Caco-2 (cell line): ENCODE measurements at regions of chr11 and their contacts with region 1.

Region 1: GRCh38 chr11:73335204-73335923 is 27.3 kb downstream of the ARHGEF17 start:
- DNase-seq: peak; percentile 91 to 96
- H3K4me3 ChIP-seq: no peak overlapping the region
- H3K4me3 Mint-ChIP-seq: no peak overlapping the region
- H3K27ac Mint-ChIP-seq: peak overlapping the region; percentile 19
- H3K4me1 ChIP-seq: peaks cover 52% of the 10 kb centered on the region
- H3K4me1 Mint-ChIP-seq: peaks cover 36% of the 10 kb centered on the region
- H3K27me3 ChIP-seq: no peaks in the 10 kb centered on the region
- H3K27me3 Mint-ChIP-seq: no peaks in the 10 kb centered on the region
- CTCF ChIP-seq: peak; percentile 100

Region 2: GRCh38 chr11:73215191-73216134 is 119.9 kb before region 1 on chr11:
- CTCF ChIA-PET with region 1: no interaction called
- POLR2A ChIA-PET with region 1: no interaction called
- intact Hi-C with region 1: no loop called
- DNase-seq: no peak
- H3K4me3 ChIP-seq: no peak overlapping the region
- H3K4me3 Mint-ChIP-seq: no peak overlapping the region
- H3K27ac Mint-ChIP-seq: no peak overlapping the region
- H3K4me1 ChIP-seq: peaks cover 30% of the 10 kb centered on the region
- H3K4me1 Mint-ChIP-seq: peaks cover 26% of the 10 kb centered on the region
- H3K27me3 ChIP-seq: no peaks in the 10 kb centered on the region
- H3K27me3 Mint-ChIP-seq: no peaks in the 10 kb centered on the region
- CTCF ChIP-seq: no peak

Region 3: DNA sequence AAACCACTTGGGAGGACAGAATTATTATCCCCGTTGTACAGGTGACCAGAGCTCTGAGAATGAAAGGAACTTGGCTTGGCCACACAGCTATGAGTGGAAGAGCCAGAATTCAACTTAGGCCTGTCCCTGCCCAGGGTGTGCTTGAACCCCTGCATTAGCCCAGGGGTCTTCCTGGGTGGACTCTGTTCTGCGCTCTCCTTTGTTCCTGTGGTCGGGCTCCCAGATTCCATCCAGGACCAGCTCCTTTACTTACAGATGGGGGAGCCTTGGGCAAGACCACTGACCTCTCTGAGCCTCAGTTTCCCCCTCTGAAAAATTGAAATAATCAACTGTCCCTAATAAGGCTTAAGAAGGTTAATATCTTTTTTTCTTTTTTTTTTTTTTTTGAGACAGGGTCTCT is 80.8 kb before region 1 on chr11:
- CTCF ChIA-PET with region 1: no interaction called
- POLR2A ChIA-PET with region 1: no interaction called
- intact Hi-C with region 1: no loop called
- DNase-seq: no peak
- H3K4me3 ChIP-seq: no peak overlapping the region
- H3K4me3 Mint-ChIP-seq: no peak overlapping the region
- H3K27ac Mint-ChIP-seq: no peak overlapping the region
- H3K4me1 ChIP-seq: peaks cover 12% of the 10 kb centered on the region
- H3K4me1 Mint-ChIP-seq: peaks cover 15% of the 10 kb centered on the region
- H3K27me3 ChIP-seq: no peaks in the 10 kb centered on the region
- H3K27me3 Mint-ChIP-seq: no peaks in the 10 kb centered on the region
- CTCF ChIP-seq: no peak

Region 4: GRCh38 chr11:73295231-73295995 is 40.0 kb before region 1 on chr11:
- CTCF ChIA-PET with region 1: interaction called, 26 read pairs
- POLR2A ChIA-PET with region 1: no interaction called
- intact Hi-C with region 1: loop called (anchors 1 kb)
- DNase-seq: peak; percentile 73 to 86
- H3K4me3 ChIP-seq: no peak overlapping the region
- H3K4me3 Mint-ChIP-seq: no peak overlapping the region
- H3K27ac Mint-ChIP-seq: no peak overlapping the region
- H3K4me1 ChIP-seq: peaks cover 23% of the 10 kb centered on the region
- H3K4me1 Mint-ChIP-seq: peaks cover 10% of the 10 kb centered on the region
- H3K27me3 ChIP-seq: no peaks in the 10 kb centered on the region
- H3K27me3 Mint-ChIP-seq: no peaks in the 10 kb centered on the region
- CTCF ChIP-seq: peak; percentile 95 to 97

Region 5: DNA sequence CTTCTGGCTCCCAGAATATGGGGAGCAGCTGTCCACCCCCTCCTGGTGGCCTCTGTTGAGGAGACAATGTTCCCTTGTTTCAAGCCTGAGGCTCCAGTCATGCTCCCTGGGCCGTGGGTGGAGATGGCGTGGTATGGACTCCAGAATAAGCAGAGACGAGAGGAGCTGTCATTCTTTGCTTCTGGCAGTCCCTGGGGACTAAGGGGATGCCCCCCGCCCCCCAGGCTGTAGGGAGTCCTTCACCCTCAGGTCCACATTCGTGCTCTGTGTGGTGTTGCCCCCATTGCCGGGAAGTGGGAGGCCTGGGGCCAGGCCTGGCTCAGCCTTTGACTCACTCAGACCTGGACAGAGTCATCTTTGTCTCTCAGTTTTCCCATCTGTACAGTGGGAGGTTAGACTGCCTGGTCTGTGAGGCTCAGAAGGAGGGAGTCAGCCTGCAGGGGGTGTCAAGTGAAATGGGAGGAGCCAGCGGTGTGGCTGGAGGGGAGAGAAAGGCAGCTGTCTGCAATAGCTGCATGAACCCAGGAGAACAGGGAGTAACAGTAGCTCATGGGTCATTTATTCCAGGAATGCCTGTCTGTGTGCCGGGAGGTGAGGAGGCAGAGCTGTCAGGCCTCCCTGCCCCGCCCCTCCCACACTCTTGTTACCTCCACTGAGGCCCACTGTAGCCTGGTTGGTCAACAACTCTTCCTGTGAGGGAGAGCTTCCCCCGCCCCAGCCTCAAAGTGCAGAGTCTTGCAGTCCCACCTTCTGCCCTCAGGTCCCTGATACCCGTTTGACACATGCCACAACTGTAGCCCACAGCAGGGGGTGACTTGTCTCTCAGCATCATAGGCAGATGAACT is 21.0 kb before region 1 on chr11:
- CTCF ChIA-PET with region 1: interaction called, 285 read pairs
- POLR2A ChIA-PET with region 1: interaction called, 17 read pairs
- intact Hi-C with region 1: no loop called
- DNase-seq: peak; percentile 88 to 93
- H3K4me3 ChIP-seq: no peak overlapping the region
- H3K4me3 Mint-ChIP-seq: peak overlapping the region; percentile 4
- H3K27ac Mint-ChIP-seq: peak overlapping the region; percentile 35
- H3K4me1 ChIP-seq: peaks cover 51% of the 10 kb centered on the region
- H3K4me1 Mint-ChIP-seq: peaks cover 32% of the 10 kb centered on the region
- H3K27me3 ChIP-seq: no peaks in the 10 kb centered on the region
- H3K27me3 Mint-ChIP-seq: no peaks in the 10 kb centered on the region
- CTCF ChIP-seq: no peak

Region 6: DNA sequence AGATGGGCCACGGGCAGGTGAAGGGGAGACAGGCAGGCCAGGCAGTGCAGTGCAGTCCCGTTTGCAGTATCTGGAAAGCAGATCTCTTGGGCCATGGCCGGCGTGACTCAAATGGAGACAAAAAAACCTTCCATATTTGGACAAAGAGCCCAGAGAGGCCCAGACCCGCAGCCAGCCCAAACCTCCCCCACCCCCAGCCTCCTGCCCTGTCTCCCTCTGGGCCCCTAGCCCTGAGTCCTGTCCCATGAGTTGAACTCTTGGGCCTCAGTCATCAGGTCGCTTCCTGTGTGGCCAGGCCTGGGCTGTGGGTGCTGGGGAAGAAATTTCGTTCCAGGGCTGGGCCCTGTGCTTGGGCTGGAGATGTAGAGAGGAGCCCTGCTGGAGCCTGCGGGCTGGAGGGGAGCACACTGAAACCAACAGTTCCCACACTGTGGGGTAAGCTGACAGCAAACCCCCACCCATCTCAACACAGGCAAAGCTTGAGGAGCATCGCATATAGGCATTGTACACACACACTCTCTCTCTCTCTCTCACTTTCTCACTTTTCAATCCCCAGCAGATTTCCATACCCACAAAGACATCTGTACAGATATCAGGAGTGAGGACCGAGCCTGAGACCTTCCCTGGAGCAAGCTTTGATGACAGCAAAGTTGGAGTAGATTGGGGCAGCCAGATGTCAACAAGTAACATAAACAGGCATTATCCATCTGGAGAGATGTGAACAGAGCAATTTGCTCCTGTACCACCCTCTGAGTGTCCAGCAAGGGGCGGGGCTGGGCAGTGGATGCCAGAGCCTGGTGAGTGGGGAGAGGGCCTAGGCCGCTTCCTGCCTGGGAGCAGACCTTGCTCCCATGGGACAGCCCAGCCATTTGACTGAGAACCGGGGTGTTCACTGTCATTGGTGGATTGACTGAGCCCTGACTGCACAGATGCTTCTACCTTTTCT is 10.1 kb before region 1 on chr11:
- CTCF ChIA-PET with region 1: interaction called, 12 read pairs
- POLR2A ChIA-PET with region 1: no interaction called
- intact Hi-C with region 1: no loop called
- DNase-seq: no peak
- H3K4me3 ChIP-seq: no peak overlapping the region
- H3K4me3 Mint-ChIP-seq: no peak overlapping the region
- H3K27ac Mint-ChIP-seq: no peak overlapping the region
- H3K4me1 ChIP-seq: peaks cover 22% of the 10 kb centered on the region
- H3K4me1 Mint-ChIP-seq: peaks cover 45% of the 10 kb centered on the region
- H3K27me3 ChIP-seq: no peaks in the 10 kb centered on the region
- H3K27me3 Mint-ChIP-seq: no peaks in the 10 kb centered on the region
- CTCF ChIP-seq: no peak

Region 7: GRCh38 chr11:73393479-73394380 is 58.4 kb after region 1 on chr11:
- CTCF ChIA-PET with region 1: interaction called, 13 read pairs
- POLR2A ChIA-PET with region 1: no interaction called
- intact Hi-C with region 1: no loop called
- DNase-seq: peak; percentile 85 to 89
- H3K4me3 ChIP-seq: no peak overlapping the region
- H3K4me3 Mint-ChIP-seq: no peak overlapping the region
- H3K27ac Mint-ChIP-seq: no peak overlapping the region
- H3K4me1 ChIP-seq: no peaks in the 10 kb centered on the region
- H3K4me1 Mint-ChIP-seq: no peaks in the 10 kb centered on the region
- H3K27me3 ChIP-seq: no peaks in the 10 kb centered on the region
- H3K27me3 Mint-ChIP-seq: no peaks in the 10 kb centered on the region
- CTCF ChIP-seq: peak; percentile 92 to 97

Region 8: GRCh38 chr11:73429121-73429750 is 93.9 kb after region 1 on chr11:
- CTCF ChIA-PET with region 1: no interaction called
- POLR2A ChIA-PET with region 1: no interaction called
- intact Hi-C with region 1: no loop called
- DNase-seq: no peak
- H3K4me3 ChIP-seq: no peak overlapping the region
- H3K4me3 Mint-ChIP-seq: no peak overlapping the region
- H3K27ac Mint-ChIP-seq: no peak overlapping the region
- H3K4me1 ChIP-seq: no peaks in the 10 kb centered on the region
- H3K4me1 Mint-ChIP-seq: no peaks in the 10 kb centered on the region
- H3K27me3 ChIP-seq: no peaks in the 10 kb centered on the region
- H3K27me3 Mint-ChIP-seq: no peaks in the 10 kb centered on the region
- CTCF ChIP-seq: no peak

Region 9: DNA sequence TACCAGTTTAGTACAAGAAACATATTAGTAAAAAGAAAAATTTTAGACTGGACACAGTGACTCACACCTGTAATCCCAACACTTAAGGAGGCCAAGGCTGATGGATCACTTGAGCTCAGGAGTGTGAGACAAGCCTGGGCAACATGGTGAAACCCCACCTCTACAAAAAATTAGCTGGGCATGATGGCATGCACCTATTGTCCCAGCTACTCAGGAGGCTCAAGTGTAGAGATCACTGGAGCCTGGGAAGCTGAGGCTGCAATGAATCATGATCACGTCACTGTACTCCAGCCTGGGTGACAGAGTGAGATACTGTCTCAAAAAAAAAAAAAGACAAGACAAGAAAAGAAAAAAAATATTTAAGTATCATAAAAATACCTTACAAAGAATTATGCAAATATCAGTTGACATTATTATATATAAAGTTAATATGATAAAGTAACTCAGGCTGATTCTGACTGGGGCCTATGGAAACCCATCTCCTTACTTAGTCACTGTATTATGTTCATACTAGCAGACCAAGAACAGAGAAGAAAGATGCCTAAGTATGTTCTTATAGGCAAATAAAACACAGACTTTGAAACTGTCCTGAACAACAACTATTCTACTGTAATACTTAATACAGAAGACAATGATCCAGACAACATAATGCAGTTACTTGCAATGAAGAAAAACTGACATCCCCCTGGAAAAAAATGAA is 235.2 kb after region 1 on chr11:
- CTCF ChIA-PET with region 1: no interaction called
- POLR2A ChIA-PET with region 1: no interaction called
- intact Hi-C with region 1: no loop called
- DNase-seq: no peak
- H3K4me3 ChIP-seq: no peak overlapping the region
- H3K4me3 Mint-ChIP-seq: no peak overlapping the region
- H3K27ac Mint-ChIP-seq: no peak overlapping the region
- H3K4me1 ChIP-seq: peaks cover 13% of the 10 kb centered on the region
- H3K4me1 Mint-ChIP-seq: peaks cover 12% of the 10 kb centered on the region
- H3K27me3 ChIP-seq: no peaks in the 10 kb centered on the region
- H3K27me3 Mint-ChIP-seq: no peaks in the 10 kb centered on the region
- CTCF ChIP-seq: no peak